Ovary (tissue), 10 donors: ENCODE measurements at regions of chr6 and their contacts with region 1.

Region 1: DNA sequence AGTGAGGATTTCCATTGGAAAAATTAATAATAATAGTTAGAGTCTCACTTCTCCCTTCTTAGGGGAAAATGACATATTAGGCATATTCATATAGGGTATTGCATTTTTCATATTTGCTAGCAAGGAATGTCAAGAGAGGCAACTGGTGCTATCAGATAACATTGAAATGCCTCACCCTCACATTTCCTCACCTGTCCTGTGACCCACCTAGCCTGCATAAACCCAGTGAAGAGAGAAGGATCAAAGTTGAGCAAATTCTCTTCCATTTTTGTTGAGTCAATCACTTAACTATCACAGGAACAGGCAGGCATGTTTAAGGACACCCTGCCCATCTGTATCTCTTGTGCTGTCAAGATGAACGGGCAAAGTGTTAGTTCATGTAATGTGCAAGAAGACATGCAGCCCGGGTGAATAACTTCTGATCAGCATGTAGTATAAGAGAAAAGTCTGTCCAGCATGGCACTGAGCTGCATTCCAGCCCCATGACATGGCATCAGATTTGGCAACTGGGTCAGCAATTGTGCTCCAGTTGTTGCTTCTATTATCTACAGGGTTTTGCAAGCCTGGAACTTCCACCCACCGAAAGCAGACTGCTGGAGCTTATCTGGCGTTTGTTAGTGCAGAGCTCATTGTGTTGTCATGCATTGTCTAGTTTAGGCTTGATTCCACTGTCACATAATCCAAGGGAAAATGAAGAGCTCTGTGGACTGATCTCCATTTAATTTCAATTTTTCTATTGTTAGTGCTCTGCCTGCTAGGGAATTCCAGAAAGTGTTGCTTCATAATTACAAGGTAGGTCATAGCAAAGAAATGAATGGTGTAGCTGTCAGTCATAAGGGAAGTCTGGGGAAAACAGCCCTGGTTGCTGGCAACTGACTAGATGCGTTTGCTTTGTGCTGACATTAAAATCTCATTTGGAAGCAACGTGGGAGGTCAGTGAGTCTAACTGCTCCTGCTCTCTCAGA is 138.4 kb upstream of the TNFAIP3 start:
- DNase-seq: no peak
- H3K4me3 ChIP-seq: no peak overlapping the region
- H3K27ac ChIP-seq: no peak overlapping the region
- H3K4me1 ChIP-seq: peaks cover 2% of the 10 kb centered on the region
- H3K27me3 ChIP-seq: no peaks in the 10 kb centered on the region
- CTCF ChIP-seq: no peak
- EP300 ChIP-seq: no peak
- POLR2A ChIP-seq: no peak

Region 2: GRCh38 chr6:137799950-137800568 is 71.4 kb after region 1 on chr6:
- intact Hi-C with region 1: loop called in 1 of 4 experiments (anchors 10 kb)
- DNase-seq: peak in 3 of 5 donors; percentile 32 to 76 (median 37)
- H3K4me3 ChIP-seq: no peak overlapping the region
- H3K27ac ChIP-seq: no peak overlapping the region
- H3K4me1 ChIP-seq: peaks cover 4% of the 10 kb centered on the region
- H3K27me3 ChIP-seq: no peaks in the 10 kb centered on the region
- CTCF ChIP-seq: peak in 2 of 3 donors; percentile 29 to 74
- EP300 ChIP-seq: no peak
- POLR2A ChIP-seq: no peak

Region 3: GRCh38 chr6:138477913-138478539 is 749.4 kb after region 1 on chr6:
- intact Hi-C with region 1: no loop called
- DNase-seq: no peak
- H3K4me3 ChIP-seq: no peak overlapping the region
- H3K27ac ChIP-seq: no peak overlapping the region
- H3K4me1 ChIP-seq: no peaks in the 10 kb centered on the region
- H3K27me3 ChIP-seq: no peaks in the 10 kb centered on the region
- CTCF ChIP-seq: no peak
- EP300 ChIP-seq: no peak
- POLR2A ChIP-seq: no peak